ENCODE measurements at regions of chr7 and their contacts with region 1.

Region 1: GRCh38 chr7:155506854-155507337 is 39.5 kb downstream of the CNPY1 start:
- DNase-seq: no peak
- ATAC-seq: no peak
- H3K4me3 ChIP-seq: no peak overlapping the region
- H3K4me3 Mint-ChIP-seq: no peak overlapping the region
- H3K27ac ChIP-seq: no peak overlapping the region
- H3K27ac Mint-ChIP-seq: no peak overlapping the region
- H3K4me1 ChIP-seq: peaks cover 14% of the 10 kb centered on the region
- H3K4me1 Mint-ChIP-seq: peaks cover 31% of the 10 kb centered on the region
- H3K27me3 ChIP-seq: peaks cover 63 to 92% of the 10 kb centered on the region in 2 experiments
- H3K27me3 Mint-ChIP-seq: peaks cover 97% of the 10 kb centered on the region
- CTCF ChIP-seq: no peak

Region 2: GRCh38 chr7:155371884-155372781 is 134.8 kb before region 1 on chr7:
- CTCF ChIA-PET with region 1: no interaction called
- POLR2A ChIA-PET with region 1: no interaction called
- intact Hi-C with region 1: loop called in 1 of 2 experiments (anchors 10 kb)
- DNase-seq: peak in 2 of 14 experiments; percentile 35 to 42
- ATAC-seq: no peak
- H3K4me3 ChIP-seq: no peak overlapping the region
- H3K4me3 Mint-ChIP-seq: no peak overlapping the region
- H3K27ac ChIP-seq: no peak overlapping the region
- H3K27ac Mint-ChIP-seq: no peak overlapping the region
- H3K4me1 ChIP-seq: peaks cover 42% of the 10 kb centered on the region
- H3K4me1 Mint-ChIP-seq: peaks cover 33% of the 10 kb centered on the region
- H3K27me3 ChIP-seq: peaks cover 51 to 70% of the 10 kb centered on the region in 2 experiments
- H3K27me3 Mint-ChIP-seq: peaks cover 76% of the 10 kb centered on the region
- CTCF ChIP-seq: no peak

Region 3: DNA sequence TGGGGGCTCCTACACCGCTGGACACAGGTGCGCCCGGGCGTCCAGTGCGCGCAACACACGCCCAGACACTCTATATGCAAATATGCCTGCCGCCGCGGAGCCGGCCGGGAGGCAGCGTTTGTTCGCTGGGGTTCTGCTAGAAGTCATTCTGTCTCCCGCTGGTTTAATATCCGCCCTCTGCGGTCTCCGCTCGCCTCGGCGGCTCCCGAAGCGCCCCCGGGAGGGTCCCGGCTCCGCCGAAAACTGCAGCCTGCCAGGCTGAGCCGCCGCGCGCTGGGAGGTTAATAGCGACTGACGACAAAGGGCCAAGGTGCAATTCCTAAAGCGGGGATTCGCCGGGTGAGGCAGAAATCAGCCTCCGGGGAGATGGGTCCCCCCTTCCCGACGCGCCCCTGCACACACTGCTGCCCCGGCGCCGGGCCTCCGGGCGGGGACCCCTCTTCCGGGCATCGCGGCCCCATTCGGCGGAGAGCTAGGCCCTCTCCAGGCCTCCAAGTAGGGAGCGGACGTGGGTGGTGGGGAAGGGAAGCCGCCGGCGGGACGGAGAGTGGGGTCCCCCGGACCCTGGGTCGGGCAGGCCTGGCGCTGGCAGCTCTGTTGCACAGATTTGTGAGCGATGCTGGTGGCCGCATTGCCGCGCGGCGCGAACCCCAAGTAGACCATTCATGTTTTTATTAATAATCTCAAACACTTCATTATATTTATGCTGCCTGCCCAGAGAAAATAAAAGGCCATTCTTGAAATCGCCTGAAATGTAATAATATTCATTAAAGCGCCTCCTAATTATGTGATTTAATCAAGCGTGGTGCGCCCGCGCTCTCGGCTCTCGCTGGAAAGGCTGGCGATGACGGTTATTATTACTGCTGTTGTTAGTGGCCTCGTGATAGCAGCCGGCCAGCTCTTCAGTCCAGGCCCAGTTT is 39.8 kb before region 1 on chr7:
- CTCF ChIA-PET with region 1: no interaction called
- POLR2A ChIA-PET with region 1: no interaction called
- intact Hi-C with region 1: loop called in 1 of 2 experiments (anchors 5 kb)
- DNase-seq: peak in 4 of 14 experiments; percentile 1 to 40 (median 14)
- ATAC-seq: peak; percentile 60
- H3K4me3 ChIP-seq: no peak overlapping the region
- H3K4me3 Mint-ChIP-seq: no peak overlapping the region
- H3K27ac ChIP-seq: no peak overlapping the region
- H3K27ac Mint-ChIP-seq: no peak overlapping the region
- H3K4me1 ChIP-seq: peaks cover 27% of the 10 kb centered on the region
- H3K4me1 Mint-ChIP-seq: peaks cover 20% of the 10 kb centered on the region
- H3K27me3 ChIP-seq: peaks cover 91 to 99% of the 10 kb centered on the region in 2 experiments
- H3K27me3 Mint-ChIP-seq: peaks cover 88% of the 10 kb centered on the region
- CTCF ChIP-seq: no peak

Region 4: GRCh38 chr7:155555116-155555695 is 48.3 kb after region 1 on chr7:
- CTCF ChIA-PET with region 1: no interaction called
- POLR2A ChIA-PET with region 1: no interaction called
- intact Hi-C with region 1: no loop called
- DNase-seq: no peak
- ATAC-seq: no peak
- H3K4me3 ChIP-seq: no peak overlapping the region
- H3K4me3 Mint-ChIP-seq: no peak overlapping the region
- H3K27ac ChIP-seq: no peak overlapping the region
- H3K27ac Mint-ChIP-seq: no peak overlapping the region
- H3K4me1 ChIP-seq: no peaks in the 10 kb centered on the region
- H3K4me1 Mint-ChIP-seq: no peaks in the 10 kb centered on the region
- H3K27me3 ChIP-seq: peaks cover 4 to 8% of the 10 kb centered on the region in 2 experiments
- H3K27me3 Mint-ChIP-seq: peaks cover 5% of the 10 kb centered on the region
- CTCF ChIP-seq: no peak